Activated CD4-positive, alpha-beta memory T cell treated with anti-CD3 and anti-CD28 coated beads for 36 hours (primary cell): ENCODE measurements at regions of chr17 and their contacts with region 1.

Region 1: GRCh38 chr17:43125133-43125966 is at the start of gene BRCA1:
- DNase-seq: peak; percentile 97
- H3K4me3 Mint-ChIP-seq: peak within 1 kb of the TSS; percentile 97
- H3K27ac Mint-ChIP-seq: peak within 1 kb of the TSS; percentile 95
- H3K4me1 Mint-ChIP-seq: peaks cover 34% of the 10 kb centered on the region
- H3K27me3 Mint-ChIP-seq: no peaks in the 10 kb centered on the region
- total RNA-seq, gene BRCA1: 92.8 to 103 TPM

Region 2: DNA sequence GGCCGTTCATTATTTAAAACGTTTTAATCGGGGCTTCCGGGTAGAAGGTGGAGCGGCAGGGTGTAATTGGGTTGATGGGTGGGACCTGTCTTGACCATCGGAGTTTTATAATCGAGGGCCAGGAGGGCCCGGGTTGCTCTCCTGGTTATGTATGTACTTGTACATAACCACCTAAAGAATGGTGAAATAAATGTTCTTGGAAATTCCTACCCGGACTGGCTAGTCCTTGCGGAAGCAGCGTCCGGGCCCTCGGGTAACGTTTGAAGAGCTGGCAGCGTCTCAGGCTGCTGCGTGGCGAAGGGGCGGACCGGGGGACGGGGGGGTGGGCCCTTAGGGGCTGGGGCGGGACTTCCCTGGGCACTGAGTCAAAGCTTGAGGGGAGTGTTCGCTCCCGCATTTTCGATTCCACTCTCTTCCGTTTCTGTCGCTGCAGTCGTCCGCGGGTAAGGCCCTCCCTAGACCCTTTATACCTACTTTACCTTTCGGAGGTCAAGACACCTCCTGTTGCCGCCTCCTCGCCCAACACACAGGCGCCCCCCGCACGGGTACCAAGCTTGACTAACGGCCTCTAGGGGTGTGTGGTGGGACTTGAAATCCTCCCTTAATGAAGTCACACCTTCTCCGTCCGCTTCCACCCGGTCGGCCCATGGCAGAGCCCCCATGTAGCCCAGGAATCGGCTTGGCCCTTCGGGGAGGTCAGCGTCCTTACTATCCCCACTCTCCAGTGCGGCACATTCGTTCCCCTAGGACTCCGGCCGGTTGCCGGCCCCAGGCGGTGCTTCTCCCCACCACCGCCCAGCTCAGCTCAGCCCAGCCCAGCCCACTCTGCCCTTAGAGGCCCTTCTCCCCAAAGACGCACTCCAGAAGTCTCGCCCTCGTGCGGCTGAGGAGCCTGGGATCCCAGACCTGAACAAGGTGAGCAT is 86.4 kb after region 1 on chr17 and contains the start of gene TMEM106A:
- CTCF ChIA-PET with region 1: interaction called, 3 read pairs
- POLR2A ChIA-PET with region 1: interaction called, 3 read pairs
- intact Hi-C with region 1: loop called (anchors 2 kb)
- DNase-seq: peak; percentile 85
- H3K4me3 Mint-ChIP-seq: peak within 1 kb of the TSS; percentile 88
- H3K27ac Mint-ChIP-seq: peak within 1 kb of the TSS; percentile 82
- H3K4me1 Mint-ChIP-seq: peaks cover 27% of the 10 kb centered on the region
- H3K27me3 Mint-ChIP-seq: no peaks in the 10 kb centered on the region
- total RNA-seq, gene TMEM106A: 10.1 to 10.4 TPM